ENCODE measurements at regions of chr11 and their contacts with region 1.

Region 1: DNA sequence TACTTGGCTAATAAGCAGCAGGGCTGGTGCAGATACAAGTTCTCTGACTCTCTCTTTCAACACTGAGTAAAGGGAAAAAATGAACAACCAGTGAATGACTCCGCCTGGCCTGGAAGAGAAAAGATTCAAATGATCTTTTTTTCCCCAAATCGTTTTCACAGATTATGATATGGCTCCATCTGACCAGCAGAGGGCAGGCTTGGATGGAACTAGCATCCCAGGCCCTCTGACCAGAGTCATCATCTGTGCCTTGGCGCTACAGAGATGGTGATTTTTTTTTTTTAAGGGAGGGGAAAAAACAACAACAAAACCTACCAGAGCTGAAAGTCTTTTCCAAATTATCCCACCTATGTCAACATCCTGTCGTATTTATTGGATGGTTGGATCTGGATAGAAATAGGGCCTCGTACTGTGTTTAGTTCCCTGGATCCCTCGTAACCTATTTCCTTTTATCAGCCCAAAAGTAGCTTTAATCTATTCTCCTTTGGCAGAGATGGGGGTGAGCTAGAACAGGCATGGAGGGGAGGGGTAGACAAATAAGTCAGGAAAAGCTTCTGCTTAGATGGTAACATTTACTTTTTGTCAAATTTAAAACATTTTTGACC is 69.7 kb downstream of the PRSS23 start:
- DNase-seq: peak; percentile 46
- H3K4me3 Mint-ChIP-seq: no peak overlapping the region
- H3K27ac Mint-ChIP-seq: no peak overlapping the region
- H3K4me1 Mint-ChIP-seq: no peaks in the 10 kb centered on the region
- H3K27me3 Mint-ChIP-seq: no peaks in the 10 kb centered on the region
- CTCF ChIP-seq: peak; percentile 71

Region 2: GRCh38 chr11:85627998-85628770 is 1241.9 kb before region 1 on chr11 and contains the start of gene TMEM126B:
- CTCF ChIA-PET with region 1: no interaction called
- intact Hi-C with region 1: no loop called
- DNase-seq: peak; percentile 92
- H3K4me3 Mint-ChIP-seq: peak within 1 kb of the TSS; percentile 96
- H3K27ac Mint-ChIP-seq: peak within 1 kb of the TSS; percentile 94
- H3K4me1 Mint-ChIP-seq: peaks cover 16% of the 10 kb centered on the region
- H3K27me3 Mint-ChIP-seq: no peaks in the 10 kb centered on the region
- CTCF ChIP-seq: no peak
- total RNA-seq, gene TMEM126B: 30.5 and 31.8 TPM in 2 replicates

Region 3: GRCh38 chr11:86919557-86920210 is 49.6 kb after region 1 on chr11:
- CTCF ChIA-PET with region 1: no interaction called
- intact Hi-C with region 1: loop called (anchors 1 kb)
- DNase-seq: no peak
- H3K4me3 Mint-ChIP-seq: no peak overlapping the region
- H3K27ac Mint-ChIP-seq: no peak overlapping the region
- H3K4me1 Mint-ChIP-seq: peaks cover 18% of the 10 kb centered on the region
- H3K27me3 Mint-ChIP-seq: no peaks in the 10 kb centered on the region
- CTCF ChIP-seq: peak; percentile 37